ENCODE measurements at regions of chr17 and their contacts with region 1.

Region 1: GRCh38 chr17:50661795-50662391 is 27.2 kb downstream of the ABCC3 start:
- DNase-seq: peak; percentile 100
- ATAC-seq: peak; percentile 61 to 75
- H3K4me3 ChIP-seq: 0 out of 3 replicates have a peak overlapping the region, but pooled peaks have one; percentile 8
- H3K27ac ChIP-seq: peak overlapping the region; percentile 98
- H3K4me1 ChIP-seq: peaks cover 97% of the 10 kb centered on the region
- CTCF ChIP-seq: no peak
- EP300 ChIP-seq: peak; percentile 96 to 98
- POLR2A ChIP-seq: no peak
- RAD21 ChIP-seq: peak; percentile 21 to 65; a peak in 4 of 5 replicates

Region 2: DNA sequence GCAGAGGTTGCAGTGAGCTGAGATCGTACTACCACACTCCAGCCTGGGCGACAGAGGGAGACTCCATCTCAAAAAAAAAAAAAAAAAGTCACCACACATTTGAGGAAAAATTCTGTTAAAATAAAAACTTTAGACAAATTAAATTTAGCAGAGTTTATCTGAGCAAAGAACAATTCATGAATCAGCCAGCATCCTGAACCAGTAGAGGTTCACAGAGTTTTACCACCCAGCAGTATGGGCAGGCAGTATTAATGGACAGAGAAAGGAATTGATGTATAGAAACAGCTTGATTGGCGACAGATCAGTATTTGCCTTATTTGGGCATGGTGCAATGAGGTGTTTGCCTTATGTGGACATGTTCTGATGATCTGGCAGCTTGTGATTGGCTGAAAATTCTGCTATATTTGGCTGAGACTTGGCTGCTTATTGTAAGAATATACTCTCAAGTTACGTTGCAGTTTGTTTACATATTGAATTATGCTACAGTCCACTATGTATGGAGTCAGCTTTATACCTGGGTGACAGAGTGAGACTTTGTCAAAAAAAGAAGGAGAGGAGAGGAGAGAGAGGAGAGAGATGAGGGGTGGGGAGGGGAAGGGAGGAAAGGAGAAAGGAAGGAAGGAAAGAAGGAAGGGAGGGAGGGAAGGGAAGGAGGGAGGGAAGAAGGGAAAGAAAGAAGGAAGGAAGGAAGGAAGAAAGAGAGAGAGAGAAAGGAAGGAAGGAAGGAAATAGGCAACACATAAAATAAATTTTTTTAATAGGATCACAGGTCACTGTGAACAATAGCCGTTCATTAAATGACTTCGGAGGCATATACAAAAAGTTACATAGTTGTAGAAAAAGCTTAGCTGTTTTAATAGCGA is 12.6 kb before region 1 on chr17:
- CTCF ChIA-PET with region 1: interaction called, 2,097 read pairs
- POLR2A ChIA-PET with region 1: interaction called, 85 read pairs
- DNase-seq: peak in 1 of 2 experiments; percentile 90
- ATAC-seq: peak; percentile 48 to 63; a peak in 5 of 6 replicates
- H3K4me3 ChIP-seq: no peak overlapping the region
- H3K27ac ChIP-seq: peak overlapping the region; percentile 51 to 99
- H3K4me1 ChIP-seq: peaks cover 95% of the 10 kb centered on the region
- CTCF ChIP-seq: no peak
- EP300 ChIP-seq: no peak
- POLR2A ChIP-seq: no peak
- RAD21 ChIP-seq: no peak

Region 3: GRCh38 chr17:50691545-50692447 is 29.9 kb after region 1 on chr17:
- CTCF ChIA-PET with region 1: interaction called, 2,097 read pairs
- POLR2A ChIA-PET with region 1: interaction called, 64 read pairs
- DNase-seq: peak in 1 of 2 experiments; percentile 77
- ATAC-seq: peak in 1 of 2 experiments; percentile 2; a peak in 3 of 6 replicates
- H3K4me3 ChIP-seq: 0 out of 3 replicates have a peak overlapping the region, but pooled peaks have one; percentile 1
- H3K27ac ChIP-seq: peak overlapping the region; percentile 97 to 98
- H3K4me1 ChIP-seq: peaks cover 98% of the 10 kb centered on the region
- CTCF ChIP-seq: no peak
- EP300 ChIP-seq: no peak
- POLR2A ChIP-seq: no peak
- RAD21 ChIP-seq: no peak; a peak in 1 of 5 replicates

Region 4: DNA sequence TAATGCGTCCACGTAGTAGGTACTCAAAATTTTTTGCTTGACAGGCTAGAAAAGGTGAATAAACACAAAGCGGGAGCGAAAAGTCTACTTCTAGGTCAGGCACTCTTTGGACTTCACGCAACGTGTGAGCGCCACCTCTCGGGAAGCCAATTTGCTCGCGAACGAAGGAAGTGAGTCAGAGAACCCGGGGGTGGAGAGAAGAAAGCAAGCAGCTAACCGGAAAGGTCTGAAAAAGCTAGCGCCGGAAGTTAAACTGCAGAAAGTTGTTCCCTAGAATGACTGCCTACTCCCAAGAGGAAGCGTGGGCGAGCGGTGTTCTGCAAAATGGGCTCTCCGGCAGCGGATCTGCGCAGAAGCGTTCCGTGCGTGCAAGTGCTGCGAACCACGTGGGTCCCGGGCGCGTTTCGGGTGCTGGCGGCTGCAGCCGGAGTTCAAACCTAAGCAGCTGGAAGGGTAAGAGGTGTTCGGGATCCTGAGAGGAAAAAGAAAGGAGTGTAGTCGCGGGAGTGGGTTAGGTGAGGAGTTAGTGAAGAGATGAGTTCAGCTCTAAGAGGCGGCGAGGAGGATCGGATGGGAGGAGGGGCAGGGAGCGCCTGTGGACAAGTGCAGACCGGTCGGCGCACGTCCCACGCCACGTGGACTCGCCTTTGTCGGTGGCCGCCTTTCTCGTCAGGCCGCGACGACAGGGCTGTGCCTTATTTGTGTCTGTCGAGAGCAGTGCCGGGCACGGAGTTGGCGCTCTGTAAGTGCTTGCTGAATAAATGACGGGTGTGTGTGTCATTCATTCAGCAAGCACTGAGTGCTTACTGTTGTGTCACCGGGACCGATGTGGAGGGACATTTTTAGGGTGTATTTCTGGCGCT is 491.5 kb after region 1 on chr17 and contains the start of gene NME1:
- CTCF ChIA-PET with region 1: no interaction called
- POLR2A ChIA-PET with region 1: no interaction called
- DNase-seq: peak; percentile 99 to 100
- ATAC-seq: peak; percentile 96 to 98
- H3K4me3 ChIP-seq: peak within 1 kb of the TSS; percentile 74
- H3K27ac ChIP-seq: peak within 1 kb of the TSS; percentile 82 to 88
- H3K4me1 ChIP-seq: peaks cover 25% of the 10 kb centered on the region
- CTCF ChIP-seq: peak; percentile 98
- EP300 ChIP-seq: no peak
- POLR2A ChIP-seq: peak; percentile 77
- RAD21 ChIP-seq: peak; percentile 99
- polyA plus RNA-seq, gene NME1: 639 and 782 TPM in 2 replicates

Measured in A549 (cell line).